Endothelial cell of umbilical vein (primary cell): ENCODE measurements at regions of chr10 and their contacts with region 1.

Region 1: DNA sequence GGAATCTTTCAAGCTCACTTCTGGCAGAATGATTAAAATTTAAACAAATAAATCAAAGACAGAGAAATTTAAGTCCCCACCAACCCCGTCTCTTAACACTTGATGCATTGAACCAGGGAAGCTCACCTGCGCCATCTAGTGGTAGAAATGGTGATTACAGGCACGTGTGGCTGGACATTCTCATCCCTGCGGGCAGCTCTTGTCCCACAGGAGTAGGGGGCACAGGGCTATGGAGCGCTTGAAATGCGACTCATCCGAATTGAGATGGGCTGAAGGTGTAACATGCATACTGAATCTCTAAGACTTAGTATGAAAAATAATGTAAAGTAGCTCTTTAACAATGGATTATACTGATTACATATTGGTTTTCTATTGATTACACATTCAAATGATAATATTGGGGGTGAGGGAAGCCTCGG is 24.8 kb upstream of the SLIT1 start:
- DNase-seq: peak; percentile 85
- H3K4me3 ChIP-seq: no peak overlapping the region
- H3K27ac ChIP-seq: no peak overlapping the region
- H3K4me1 ChIP-seq: no peaks in the 10 kb centered on the region
- H3K27me3 ChIP-seq: no peaks in the 10 kb centered on the region
- CTCF ChIP-seq: peak; percentile 88 to 91
- POLR2A ChIP-seq: no peak

Region 2: GRCh38 chr10:96831867-96832720 is 378.5 kb before region 1 on chr10 and contains the start of gene LCOR:
- CTCF ChIA-PET with region 1: no interaction called
- POLR2A ChIA-PET with region 1: no interaction called
- dilution Hi-C with region 1: no loop called
- intact Hi-C with region 1: loop called (anchors 10 kb)
- DNase-seq: peak; percentile 85
- H3K4me3 ChIP-seq: peak within 1 kb of the TSS; percentile 81 to 99 (median 82)
- H3K27ac ChIP-seq: peak within 1 kb of the TSS; percentile 60
- H3K4me1 ChIP-seq: peaks cover 24% of the 10 kb centered on the region
- H3K27me3 ChIP-seq: no peaks in the 10 kb centered on the region
- CTCF ChIP-seq: no peak
- POLR2A ChIP-seq: peak; percentile 87
- total RNA-seq, gene LCOR: 32.9 and 39.0 TPM in 2 replicates

Region 3: DNA sequence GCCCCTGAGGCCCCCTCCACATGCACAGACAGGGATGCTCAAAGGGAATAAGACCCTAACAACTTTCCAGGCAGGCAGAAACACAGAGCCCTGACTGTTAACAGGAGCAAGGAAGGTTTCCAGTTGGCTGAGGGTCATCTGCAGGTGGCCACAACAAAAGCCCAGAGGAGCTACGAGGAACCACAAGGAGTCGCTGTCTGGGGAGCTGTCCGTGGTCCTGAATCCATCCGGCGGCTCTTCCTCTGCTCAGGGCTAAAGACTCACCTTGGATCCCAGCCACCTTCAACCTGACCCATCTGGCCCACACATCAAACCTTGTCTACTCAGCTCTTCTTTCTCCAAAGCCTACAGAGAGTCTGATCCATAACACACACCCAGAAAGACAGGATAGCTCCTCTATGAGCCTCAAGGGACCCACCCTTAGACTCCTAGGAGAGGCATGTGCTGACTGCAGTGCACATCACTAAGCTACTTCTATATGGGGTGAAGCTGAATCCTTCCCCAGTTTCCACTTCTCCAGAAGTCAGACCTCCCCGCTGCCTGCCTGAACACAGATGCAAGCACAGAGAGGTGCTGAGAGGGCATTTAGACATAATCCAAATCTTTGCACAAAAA is 128.8 kb before region 1 on chr10:
- CTCF ChIA-PET with region 1: interaction called, 397 read pairs
- POLR2A ChIA-PET with region 1: no interaction called
- dilution Hi-C with region 1: no loop called
- intact Hi-C with region 1: loop called (anchors 1 kb)
- DNase-seq: peak; percentile 57
- H3K4me3 ChIP-seq: no peak overlapping the region
- H3K27ac ChIP-seq: no peak overlapping the region
- H3K4me1 ChIP-seq: no peaks in the 10 kb centered on the region
- H3K27me3 ChIP-seq: peaks cover 0 to 6% of the 10 kb centered on the region in 2 experiments
- CTCF ChIP-seq: peak; percentile 85 to 97
- POLR2A ChIP-seq: no peak

Region 4: GRCh38 chr10:97196223-97197029 is 14.1 kb before region 1 on chr10:
- CTCF ChIA-PET with region 1: interaction called, 110 read pairs
- POLR2A ChIA-PET with region 1: no interaction called
- dilution Hi-C with region 1: no loop called
- intact Hi-C with region 1: no loop called
- DNase-seq: peak; percentile 48
- H3K4me3 ChIP-seq: peak overlapping the region; percentile 39 to 55 (median 40)
- H3K27ac ChIP-seq: no peak overlapping the region
- H3K4me1 ChIP-seq: no peaks in the 10 kb centered on the region
- H3K27me3 ChIP-seq: peaks cover 15 to 17% of the 10 kb centered on the region in 2 experiments
- CTCF ChIP-seq: peak; percentile 80 to 84
- POLR2A ChIP-seq: no peak

Region 5: GRCh38 chr10:97234400-97234799 is 23.8 kb after region 1 on chr10:
- CTCF ChIA-PET with region 1: interaction called, 15 read pairs
- POLR2A ChIA-PET with region 1: no interaction called
- dilution Hi-C with region 1: no loop called
- intact Hi-C with region 1: loop called (anchors 1 kb)
- DNase-seq: peak; percentile 62
- H3K4me3 ChIP-seq: no peak overlapping the region
- H3K27ac ChIP-seq: no peak overlapping the region
- H3K4me1 ChIP-seq: no peaks in the 10 kb centered on the region
- H3K27me3 ChIP-seq: no peaks in the 10 kb centered on the region
- CTCF ChIP-seq: peak; percentile 43 to 50
- POLR2A ChIP-seq: no peak